Left ventricle myocardium superior (tissue), 1 donor: ENCODE measurements at regions of chr16 and their contacts with region 1.

Region 1: GRCh38 chr16:15888072-15888976 is at the start of gene CEP20:
- DNase-seq: peak; percentile 100
- ATAC-seq: peak; percentile 100
- total RNA-seq, gene CEP20: 30.6 TPM

Region 2: DNA sequence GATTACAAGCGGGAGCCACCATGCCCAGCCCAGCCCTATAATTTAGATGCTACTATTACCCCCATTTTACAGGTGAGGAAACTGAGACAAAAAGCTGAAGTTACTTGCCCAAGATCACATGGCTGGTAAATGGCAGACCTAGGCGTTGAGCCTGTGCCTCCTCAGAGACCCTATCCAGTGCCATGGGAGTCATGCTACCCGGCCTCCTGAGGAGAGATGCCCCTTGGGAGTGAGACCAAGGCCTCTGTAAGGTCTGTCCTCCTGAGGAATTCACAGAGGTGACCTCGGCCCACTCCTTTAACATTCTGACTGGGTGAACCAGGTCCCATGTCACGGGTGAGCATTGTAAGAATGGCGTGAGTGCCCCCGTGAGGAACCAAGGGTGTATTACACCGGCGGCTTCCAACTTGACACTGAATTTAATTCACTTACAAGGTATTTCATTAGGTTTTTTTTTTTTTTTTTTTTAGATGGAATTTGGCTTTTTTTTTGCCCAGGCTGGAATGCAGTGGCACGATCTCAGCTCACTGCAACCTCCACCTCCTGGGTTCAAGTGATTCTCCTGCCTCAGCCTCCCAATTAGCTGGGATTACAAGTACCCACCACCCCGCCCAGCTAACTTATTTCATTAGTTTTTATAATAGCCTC is 239.3 kb after region 1 on chr16:
- intact Hi-C with region 1: loop called (anchors 5 kb)
- DNase-seq: peak; percentile 70
- ATAC-seq: peak; percentile 87